RWPE1 (cell line): ENCODE measurements at regions of chr19 and their contacts with region 1.

Region 1: DNA sequence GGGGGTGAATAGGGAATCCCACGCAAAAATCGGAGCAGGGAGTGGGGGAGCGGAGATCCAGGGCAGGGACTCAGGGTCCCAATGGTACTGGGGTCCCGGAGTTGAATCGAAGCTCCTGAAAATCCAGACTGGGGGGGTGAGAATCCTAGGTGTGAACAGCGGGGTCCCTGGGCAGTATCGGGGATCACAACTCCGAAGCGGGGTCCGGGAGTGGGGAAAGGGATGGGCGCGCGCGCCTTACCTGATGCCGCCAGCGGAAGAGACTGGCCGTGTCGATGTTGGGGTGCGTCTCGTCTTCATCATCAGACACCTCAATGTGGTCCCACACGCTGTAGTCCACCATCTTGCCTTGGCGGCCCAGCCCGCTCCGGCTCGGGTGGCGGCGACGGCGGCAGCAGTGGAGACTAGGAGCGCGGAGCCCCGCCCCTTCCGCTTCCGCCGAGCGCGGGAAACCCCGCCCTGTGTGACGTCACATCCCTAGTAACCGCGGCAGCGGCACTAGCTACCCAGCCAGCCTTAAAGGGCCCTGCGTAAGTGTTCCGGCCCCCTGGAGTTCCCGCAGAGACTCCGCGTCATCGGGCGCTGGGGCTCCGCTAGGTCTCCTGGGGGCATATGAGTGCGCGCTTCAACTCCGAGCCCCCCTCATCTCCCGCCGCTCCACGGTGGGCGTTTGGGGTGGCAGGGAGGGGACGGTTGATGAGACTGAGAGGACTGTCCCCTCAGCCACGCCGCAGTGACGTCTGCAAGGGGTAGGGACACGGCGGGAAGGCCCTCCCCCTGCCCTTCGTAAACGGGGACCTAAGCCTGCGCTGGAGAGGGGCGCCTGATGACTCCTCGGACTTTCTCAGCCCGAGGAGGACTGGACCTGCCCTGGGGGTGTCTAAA is at the start of gene CDC37:
- DNase-seq: peak; percentile 98
- H3K27ac ChIP-seq: peak within 1 kb of the TSS; percentile 70
- CTCF ChIP-seq: no peak

Region 2: GRCh38 chr19:10339380-10339960 is 63.9 kb before region 1 on chr19 and contains the start of gene ICAM3:
- CTCF ChIA-PET with region 1: no interaction called
- POLR2A ChIA-PET with region 1: no interaction called
- DNase-seq: no peak
- H3K27ac ChIP-seq: no peak within 1 kb of the TSS
- CTCF ChIP-seq: no peak

Region 3: DNA sequence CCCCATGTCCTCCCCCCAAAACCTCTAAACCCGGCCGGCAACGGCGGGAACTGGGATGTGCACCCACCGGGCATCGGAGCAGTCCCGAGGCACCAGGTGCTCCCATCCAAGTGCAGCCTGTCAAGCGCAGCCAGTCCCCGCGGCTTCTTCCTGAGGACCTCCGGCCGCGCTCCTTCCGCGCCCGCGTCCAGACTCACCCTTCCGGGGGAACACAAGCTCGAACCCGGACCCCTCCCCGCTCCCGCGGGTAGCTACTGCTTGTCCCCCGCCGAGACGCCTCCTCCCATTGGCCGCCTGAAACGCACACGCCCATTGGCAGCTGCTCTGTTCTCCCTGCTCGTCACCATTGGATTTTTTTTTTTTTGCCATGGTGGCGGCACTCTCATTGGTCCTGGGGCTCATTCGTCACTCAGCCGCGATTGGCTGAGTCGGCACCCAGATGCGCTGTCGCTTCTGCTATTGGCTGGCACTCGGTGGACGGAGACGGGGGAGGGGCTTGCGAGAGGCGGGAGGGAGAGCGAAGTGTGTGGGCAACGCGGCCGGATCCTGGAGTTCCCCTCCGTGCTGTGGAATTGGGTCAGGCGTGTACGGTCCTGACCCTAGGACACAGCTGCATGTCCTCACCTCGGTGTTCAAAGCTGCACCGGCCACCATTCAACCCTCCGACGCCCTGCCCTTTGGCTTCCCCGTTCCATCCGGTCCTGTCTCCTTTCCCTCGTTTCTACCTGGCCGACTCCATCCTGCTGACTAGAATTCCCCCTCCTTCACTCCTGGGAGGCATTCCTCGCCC is 22.9 kb before region 1 on chr19 and contains the start of gene TYK2:
- CTCF ChIA-PET with region 1: no interaction called
- POLR2A ChIA-PET with region 1: no interaction called
- DNase-seq: peak; percentile 100
- H3K27ac ChIP-seq: peak within 1 kb of the TSS; percentile 84
- CTCF ChIP-seq: no peak

Region 4: GRCh38 chr19:10416380-10417257 is 13.2 kb after region 1 on chr19:
- CTCF ChIA-PET with region 1: interaction called, 32 read pairs
- POLR2A ChIA-PET with region 1: no interaction called
- DNase-seq: peak; percentile 90
- H3K27ac ChIP-seq: peak overlapping the region; percentile 18; the same call in 1 of the 2 replicates
- CTCF ChIP-seq: peak; percentile 93

Region 5: DNA sequence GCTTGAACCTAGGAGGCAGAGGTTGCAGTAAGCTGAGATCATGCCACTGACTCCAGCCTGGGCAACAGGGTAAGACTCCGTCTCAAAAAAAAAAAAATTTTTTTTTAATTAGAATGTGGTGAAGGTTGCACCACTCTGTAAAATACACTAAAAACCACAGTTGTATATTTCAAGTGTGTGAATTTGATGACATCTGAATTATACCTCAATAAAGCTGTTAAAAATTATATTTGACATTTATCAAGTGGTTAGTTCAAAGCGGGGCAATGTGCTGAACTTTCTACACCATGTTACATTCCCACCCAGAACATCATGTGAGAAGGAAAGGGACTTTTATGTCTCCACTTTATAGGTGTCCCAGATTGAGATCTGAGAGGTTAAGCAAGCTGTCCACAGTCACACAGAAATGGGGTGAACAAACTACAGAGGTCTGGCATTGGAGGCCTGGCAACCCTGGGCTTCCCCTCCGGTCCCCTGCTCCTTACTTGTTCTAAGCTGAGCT is 119.8 kb after region 1 on chr19:
- CTCF ChIA-PET with region 1: interaction called, 12 read pairs
- POLR2A ChIA-PET with region 1: no interaction called
- DNase-seq: no peak
- H3K27ac ChIP-seq: peak overlapping the region; percentile 91
- CTCF ChIP-seq: no peak